ENCODE measurements at regions of chr13 and their contacts with region 1.

Region 1: DNA sequence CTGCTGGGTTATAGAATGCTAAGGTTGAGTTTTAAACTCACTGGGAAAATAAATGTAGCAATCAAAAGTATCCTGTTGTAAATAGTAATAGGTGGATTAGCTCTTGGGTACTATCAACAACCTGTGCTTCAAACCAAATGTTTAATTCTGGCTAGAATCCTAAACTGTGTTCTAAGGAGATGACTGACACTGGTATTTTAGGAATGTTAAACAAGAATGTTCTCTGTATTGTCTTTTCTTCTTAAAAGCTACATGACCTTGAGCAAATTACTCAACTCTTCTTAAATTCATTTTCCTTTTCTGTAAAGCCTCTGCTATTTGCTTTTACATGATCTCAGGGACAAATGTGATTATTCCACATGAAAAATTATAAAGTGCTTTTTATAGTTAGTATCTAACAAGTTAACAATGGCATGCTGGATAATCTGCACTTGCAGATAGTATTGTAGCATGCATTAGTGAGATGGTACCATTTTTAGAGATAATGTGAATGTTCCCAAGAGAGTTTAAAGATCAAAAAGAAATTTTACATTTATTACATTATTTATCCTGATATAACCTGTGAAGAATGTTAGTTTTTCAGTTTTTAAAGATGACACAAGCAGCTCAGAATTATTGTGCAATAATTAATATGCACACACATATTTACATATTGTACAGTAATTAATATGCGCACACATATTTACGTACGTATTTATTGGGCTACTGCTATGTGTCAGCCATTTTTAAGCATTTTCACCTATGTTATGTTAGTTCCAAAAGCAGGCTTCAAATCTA is 13.6 kb upstream of the EPSTI1 start:
- DNase-seq: no peak
- H3K4me3 ChIP-seq: no peak overlapping the region
- H3K27ac ChIP-seq: no peak overlapping the region
- H3K27me3 ChIP-seq: no peaks in the 10 kb centered on the region
- CTCF ChIP-seq: no peak

Region 2: DNA sequence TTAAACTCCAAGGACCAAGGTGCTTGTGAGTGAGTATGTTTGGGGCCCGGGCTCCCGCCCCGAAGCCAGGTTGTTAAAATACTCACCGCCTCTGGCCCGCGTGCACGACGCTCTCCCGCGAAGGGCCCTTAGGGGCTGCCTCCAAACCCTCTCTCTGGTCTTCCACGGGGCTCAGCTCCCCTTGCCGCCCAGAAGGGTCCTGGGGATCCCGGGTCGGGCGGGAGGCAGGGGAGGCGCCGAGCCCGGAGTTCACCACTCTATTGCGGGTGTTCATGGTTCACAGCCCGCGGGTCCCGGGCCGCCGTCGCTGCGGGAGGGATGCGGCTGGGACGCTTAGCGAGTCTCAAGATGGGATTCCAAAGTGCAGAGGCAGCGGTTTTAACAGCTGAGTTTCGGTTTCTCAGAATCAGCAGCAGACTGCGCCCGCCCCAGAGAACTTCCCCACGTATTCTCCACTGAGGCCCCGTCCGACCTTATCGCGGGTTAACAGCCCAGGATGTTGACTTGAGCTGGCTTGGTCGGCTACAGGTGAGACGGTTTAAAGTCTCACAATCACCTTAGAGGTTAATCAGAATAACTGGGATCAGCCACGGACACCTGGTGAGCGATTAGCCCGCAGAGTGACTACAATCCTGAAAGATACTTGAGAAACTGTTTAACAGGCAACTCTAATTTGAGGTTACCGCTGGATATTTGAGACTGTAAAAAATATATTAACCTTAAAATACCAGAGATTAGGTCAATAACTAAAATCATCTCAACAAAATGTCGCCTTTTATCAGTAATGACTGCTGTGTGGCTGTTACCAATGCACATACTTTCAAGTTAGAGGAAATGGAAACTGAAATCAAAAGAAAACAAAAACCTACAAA is 13.5 kb before region 1 on chr13 and contains the start of gene EPSTI1:
- CTCF ChIA-PET with region 1: no interaction called
- POLR2A ChIA-PET with region 1: interaction called, 14 read pairs
- DNase-seq: no peak
- H3K4me3 ChIP-seq: peak within 1 kb of the TSS; percentile 59
- H3K27ac ChIP-seq: peak within 1 kb of the TSS; percentile 66
- H3K27me3 ChIP-seq: no peaks in the 10 kb centered on the region
- CTCF ChIP-seq: no peak
- polyA plus RNA-seq, gene EPSTI1: 4.0 and 6.0 TPM in 2 replicates

Region 3: DNA sequence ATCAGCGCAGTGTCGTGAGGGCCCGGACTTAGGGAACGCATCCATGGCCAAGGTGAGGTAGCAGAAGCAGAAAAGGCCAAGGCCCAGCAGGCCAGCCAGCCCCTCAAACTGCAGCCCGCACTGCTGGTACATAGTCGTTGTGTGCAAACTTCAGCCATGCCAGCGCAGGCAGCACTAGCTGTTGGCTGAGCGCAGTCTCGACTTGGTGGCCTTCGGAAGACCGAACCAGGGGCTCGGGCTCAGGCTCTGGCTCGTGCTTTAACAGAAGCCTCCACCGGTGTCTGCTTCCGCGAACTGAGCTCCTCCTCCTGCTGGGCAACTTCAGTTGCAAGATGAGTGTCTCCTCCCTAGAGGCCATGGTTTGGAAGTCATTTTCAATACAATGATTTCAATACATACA is 175.2 kb after region 1 on chr13:
- CTCF ChIA-PET with region 1: no interaction called
- POLR2A ChIA-PET with region 1: no interaction called
- DNase-seq: no peak
- H3K4me3 ChIP-seq: no peak overlapping the region
- H3K27ac ChIP-seq: no peak overlapping the region
- H3K27me3 ChIP-seq: no peaks in the 10 kb centered on the region
- CTCF ChIP-seq: no peak

Region 4: GRCh38 chr13:43245374-43245964 is 239.8 kb after region 1 on chr13:
- CTCF ChIA-PET with region 1: no interaction called
- POLR2A ChIA-PET with region 1: no interaction called
- DNase-seq: peak; percentile 58
- H3K4me3 ChIP-seq: no peak overlapping the region
- H3K27ac ChIP-seq: peak overlapping the region; percentile 65
- H3K27me3 ChIP-seq: no peaks in the 10 kb centered on the region
- CTCF ChIP-seq: no peak